ENCODE measurements at regions of chr11 and their contacts with region 1.

Region 1: DNA sequence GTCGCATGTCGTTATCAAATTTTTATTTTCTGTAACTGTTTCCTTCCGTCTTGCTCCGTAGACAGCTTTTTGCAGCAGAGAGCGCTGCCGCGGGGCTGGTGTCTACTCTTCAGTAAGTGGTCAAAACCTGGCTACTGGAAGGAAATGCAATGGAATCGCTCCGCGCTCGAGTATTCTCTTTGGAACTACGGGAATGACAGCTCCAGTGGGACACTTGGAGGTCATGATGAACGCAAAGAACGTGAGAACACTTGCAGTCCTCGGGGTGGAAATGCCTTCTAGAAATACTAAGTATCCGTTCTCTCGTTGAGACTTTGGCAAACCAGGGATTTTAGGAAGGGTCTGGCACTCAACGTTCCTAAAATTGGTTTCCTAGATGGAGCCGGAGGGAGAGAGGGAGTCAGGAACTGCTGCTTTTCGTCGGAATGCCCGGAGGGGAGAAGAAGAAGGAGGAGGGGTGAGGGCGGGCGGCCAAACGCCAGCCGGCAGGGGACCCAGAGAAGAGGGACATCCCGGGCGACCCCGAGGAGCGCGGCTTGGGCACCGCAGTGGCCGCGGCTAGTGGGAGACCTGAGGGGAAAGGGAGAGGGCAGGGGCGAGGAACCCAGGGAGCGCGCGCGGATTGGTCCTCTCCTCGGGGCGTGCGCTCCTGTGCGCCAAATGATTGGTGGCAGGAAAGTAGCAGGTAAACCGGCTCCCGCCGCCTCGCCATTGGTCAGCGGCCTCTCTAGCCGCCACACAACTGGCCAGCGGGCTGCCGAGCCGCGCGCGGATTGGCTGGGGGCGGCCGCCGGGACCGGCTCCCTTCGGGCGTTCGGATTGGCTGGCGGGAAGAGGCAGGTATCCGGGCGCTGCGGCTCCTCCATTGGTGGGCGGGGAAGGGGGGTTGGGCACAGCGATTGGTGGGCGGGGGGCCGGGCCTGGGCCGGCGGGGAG is 490 bp upstream of the BMAL1 start:
- DNase-seq: peak; percentile 87 to 99 (median 96)
- H3K4me3 ChIP-seq: peak overlapping the region; percentile 63 to 100 (median 94)
- H3K27ac ChIP-seq: peak overlapping the region; percentile 20 to 97 (median 89)
- H3K27me3 ChIP-seq: no peaks in the 10 kb centered on the region
- CTCF ChIP-seq: peak in 11 of 56 donors; percentile 3 to 42 (median 9)

Region 2: GRCh38 chr11:13080861-13081405 is 196.2 kb before region 1 on chr11:
- intact Hi-C with region 1: no loop called
- DNase-seq: no peak
- H3K4me3 ChIP-seq: no peak overlapping the region
- H3K27ac ChIP-seq: no peak overlapping the region
- H3K27me3 ChIP-seq: peaks cover 0 to 54% (median 15%) of the 10 kb centered on the region in 45 donors
- CTCF ChIP-seq: no peak

Region 3: GRCh38 chr11:13160346-13160745 is 116.8 kb before region 1 on chr11:
- intact Hi-C with region 1: no loop called
- DNase-seq: no peak
- H3K4me3 ChIP-seq: no peak overlapping the region
- H3K27ac ChIP-seq: no peak overlapping the region
- H3K27me3 ChIP-seq: peaks cover 0 to 7% (median 0%) of the 10 kb centered on the region in 45 donors
- CTCF ChIP-seq: no peak

Region 4: GRCh38 chr11:13329670-13330356 is 52.7 kb after region 1 on chr11:
- intact Hi-C with region 1: loop called in 1 of 2 experiments (anchors 5 kb)
- DNase-seq: peak in 1 of 10 donors; percentile 81
- H3K4me3 ChIP-seq: no peak overlapping the region
- H3K27ac ChIP-seq: peak overlapping the region in 41 of 59 donors; percentile 8 to 69 (median 43)
- H3K27me3 ChIP-seq: no peaks in the 10 kb centered on the region
- CTCF ChIP-seq: no peak

Region 5: GRCh38 chr11:13462901-13463778 is 186.0 kb after region 1 on chr11 and contains the start of gene BTBD10:
- intact Hi-C with region 1: loop called in 1 of 2 experiments (anchors 5 kb)
- DNase-seq: peak; percentile 74 to 96 (median 91)
- H3K4me3 ChIP-seq: peak within 1 kb of the TSS; percentile 60 to 97 (median 88)
- H3K27ac ChIP-seq: peak within 1 kb of the TSS in 57 of 59 donors; percentile 21 to 94 (median 82)
- H3K27me3 ChIP-seq: no peaks in the 10 kb centered on the region
- CTCF ChIP-seq: peak in 42 of 56 donors; percentile 6 to 63 (median 31)
- total RNA-seq, gene BTBD10: 59.2 to 140 (median 103) TPM